Activated CD8-positive, alpha-beta T cell treated with anti-CD3 and anti-CD28 coated beads for 36 hours (primary cell): ENCODE measurements at regions of chr14 and their contacts with region 1.

Region 1: GRCh38 chr14:73728717-73729330 is 14.6 kb upstream of the PNMA1 start:
- DNase-seq: peak; percentile 91
- ATAC-seq: peak; percentile 89
- H3K4me3 Mint-ChIP-seq: no peak overlapping the region
- H3K27ac Mint-ChIP-seq: peak overlapping the region; percentile 75
- H3K4me1 Mint-ChIP-seq: peaks cover 28% of the 10 kb centered on the region
- H3K27me3 Mint-ChIP-seq: no peaks in the 10 kb centered on the region
- CTCF ChIP-seq: peak; percentile 93

Region 2: GRCh38 chr14:73713803-73714655 is 14.8 kb before region 1 on chr14 and contains the start of gene PNMA1:
- CTCF ChIA-PET with region 1: interaction called, 32 read pairs
- POLR2A ChIA-PET with region 1: interaction called, 4 read pairs
- intact Hi-C with region 1: no loop called
- DNase-seq: peak; percentile 89
- ATAC-seq: peak; percentile 81
- H3K4me3 Mint-ChIP-seq: peak within 1 kb of the TSS; percentile 93
- H3K27ac Mint-ChIP-seq: peak within 1 kb of the TSS; percentile 98
- H3K4me1 Mint-ChIP-seq: peaks cover 18% of the 10 kb centered on the region
- H3K27me3 Mint-ChIP-seq: no peaks in the 10 kb centered on the region
- CTCF ChIP-seq: no peak
- total RNA-seq, gene PNMA1: 22.9 to 24.1 TPM

Region 3: GRCh38 chr14:73759714-73760597 is 31.1 kb after region 1 on chr14:
- CTCF ChIA-PET with region 1: interaction called, 143 read pairs
- POLR2A ChIA-PET with region 1: interaction called, 3 read pairs
- intact Hi-C with region 1: no loop called
- DNase-seq: peak; percentile 99
- ATAC-seq: peak; percentile 75
- H3K4me3 Mint-ChIP-seq: peak overlapping the region; percentile 87
- H3K27ac Mint-ChIP-seq: peak overlapping the region; percentile 96
- H3K4me1 Mint-ChIP-seq: peaks cover 72% of the 10 kb centered on the region
- H3K27me3 Mint-ChIP-seq: no peaks in the 10 kb centered on the region
- CTCF ChIP-seq: no peak

Region 4: DNA sequence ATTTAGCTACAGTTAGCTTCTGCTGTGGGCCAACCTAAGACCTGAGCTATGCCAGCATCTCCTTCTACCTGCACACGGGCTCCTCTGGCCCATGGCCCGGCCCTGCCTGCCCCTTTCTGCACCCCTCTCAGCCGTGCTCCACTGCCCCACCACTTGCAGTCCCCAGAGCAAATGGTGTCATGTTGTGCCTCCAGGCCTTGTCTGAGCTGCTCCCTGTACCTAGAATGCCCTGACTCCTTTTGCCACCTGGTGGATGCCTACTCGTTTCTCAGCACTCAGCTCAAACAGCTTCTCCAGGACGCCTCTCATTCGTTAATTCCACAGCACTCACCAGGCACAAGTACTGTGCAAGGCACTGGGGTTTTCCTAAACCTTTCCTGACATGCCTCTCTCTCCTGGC is 48.6 kb after region 1 on chr14:
- CTCF ChIA-PET with region 1: interaction called, 14 read pairs
- POLR2A ChIA-PET with region 1: no interaction called
- intact Hi-C with region 1: no loop called
- DNase-seq: no peak
- ATAC-seq: peak; percentile 35
- H3K4me3 Mint-ChIP-seq: no peak overlapping the region
- H3K27ac Mint-ChIP-seq: peak overlapping the region; percentile 49
- H3K4me1 Mint-ChIP-seq: peaks cover 62% of the 10 kb centered on the region
- H3K27me3 Mint-ChIP-seq: no peaks in the 10 kb centered on the region
- CTCF ChIP-seq: no peak

Region 5: DNA sequence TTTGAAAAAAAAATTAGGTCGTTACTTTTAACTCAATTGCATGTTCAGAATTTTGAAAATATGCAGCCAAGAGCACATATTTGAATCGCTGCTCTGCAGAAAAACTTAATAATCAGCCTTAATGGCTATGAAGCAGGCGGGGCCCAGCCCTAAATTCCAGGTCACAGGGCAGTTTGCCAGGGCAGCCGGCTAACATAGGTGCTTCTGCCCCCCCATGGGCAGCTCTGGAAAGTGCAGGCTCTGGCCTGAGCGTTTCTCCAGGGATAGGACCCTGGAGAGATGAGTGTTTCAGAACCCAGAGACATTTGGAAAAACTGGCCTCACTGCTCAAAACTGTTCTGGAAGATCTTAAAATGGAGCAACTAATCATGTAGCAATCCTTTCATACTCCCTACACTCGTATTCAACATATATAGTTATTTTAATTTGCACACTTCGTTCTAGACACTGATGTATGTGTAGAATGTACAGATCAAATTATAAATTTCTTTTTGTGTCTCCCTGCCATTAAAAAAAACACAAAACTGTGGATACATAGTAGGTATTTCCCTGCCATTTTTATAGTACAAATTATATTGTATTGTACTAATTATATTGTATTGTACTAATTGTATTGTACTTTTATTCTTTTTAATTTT is 96.8 kb after region 1 on chr14:
- CTCF ChIA-PET with region 1: interaction called, 140 read pairs
- POLR2A ChIA-PET with region 1: interaction called, 3 read pairs
- intact Hi-C with region 1: loop called (anchors 1 kb)
- DNase-seq: peak; percentile 88
- ATAC-seq: peak; percentile 85
- H3K4me3 Mint-ChIP-seq: no peak overlapping the region
- H3K27ac Mint-ChIP-seq: no peak overlapping the region
- H3K4me1 Mint-ChIP-seq: peaks cover 19% of the 10 kb centered on the region
- H3K27me3 Mint-ChIP-seq: no peaks in the 10 kb centered on the region
- CTCF ChIP-seq: peak; percentile 89

Region 6: GRCh38 chr14:73961192-73961591 is 232.4 kb after region 1 on chr14:
- CTCF ChIA-PET with region 1: no interaction called
- POLR2A ChIA-PET with region 1: no interaction called
- intact Hi-C with region 1: no loop called
- DNase-seq: no peak
- ATAC-seq: no peak
- H3K4me3 Mint-ChIP-seq: no peak overlapping the region
- H3K27ac Mint-ChIP-seq: no peak overlapping the region
- H3K4me1 Mint-ChIP-seq: no peaks in the 10 kb centered on the region
- H3K27me3 Mint-ChIP-seq: no peaks in the 10 kb centered on the region
- CTCF ChIP-seq: no peak